ENCODE measurements at regions of chr7 and their contacts with region 1.

Region 1: DNA sequence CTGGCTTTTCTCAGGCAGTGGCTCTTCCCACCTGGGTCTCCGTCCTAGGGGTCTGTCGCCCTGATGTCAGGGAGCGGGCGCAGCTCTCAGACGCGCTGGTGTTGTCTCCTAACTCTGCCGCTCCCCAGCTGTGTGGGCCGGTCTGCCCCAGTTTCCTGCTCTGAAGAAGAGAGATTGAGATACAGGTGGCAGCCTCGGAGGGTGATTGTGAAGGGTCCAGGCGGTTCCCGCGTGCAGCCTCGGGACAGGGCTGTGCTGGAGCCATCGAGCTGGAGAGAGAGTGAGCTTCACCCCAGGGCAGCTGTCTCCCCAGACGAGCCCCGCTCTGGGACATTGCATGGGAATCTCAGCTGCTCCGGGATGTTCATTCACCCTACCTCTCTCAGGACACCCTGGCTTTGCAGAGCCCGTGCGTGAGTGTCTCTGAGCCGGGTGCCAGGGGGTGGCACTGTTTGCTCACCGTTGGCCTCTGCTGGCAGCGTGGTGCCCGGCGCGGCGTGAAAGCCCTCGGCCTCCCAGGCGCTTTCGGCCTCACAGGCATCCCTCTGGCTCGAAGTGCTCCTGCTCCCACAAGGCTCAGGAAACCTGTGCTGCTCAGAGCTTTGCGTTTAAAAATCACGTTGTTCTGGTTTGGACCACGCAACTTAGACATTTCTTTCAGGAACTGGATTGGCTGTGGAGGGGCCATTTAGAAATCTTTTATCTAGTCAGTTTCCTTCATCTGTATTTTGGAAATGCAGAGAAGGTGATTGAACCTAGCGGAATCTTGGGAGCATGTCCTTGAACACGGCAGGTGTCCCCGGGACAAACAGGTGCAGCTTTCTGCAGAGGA is 33.8 kb upstream of the ZFAND2A start:
- DNase-seq: peak in 2 of 3 donors; percentile 75 to 80
- ATAC-seq: peak; percentile 83 to 91
- H3K4me3 ChIP-seq: no peak overlapping the region
- H3K27ac ChIP-seq: no peak overlapping the region
- H3K4me1 ChIP-seq: no peaks in the 10 kb centered on the region
- H3K27me3 ChIP-seq: no peaks in the 10 kb centered on the region

Region 2: GRCh38 chr7:1412322-1413261 is 218.8 kb after region 1 on chr7:
- intact Hi-C with region 1: loop called in 1 of 4 experiments (anchors 5 kb)
- DNase-seq: peak; percentile 85 to 95 (median 92)
- ATAC-seq: peak; percentile 87 to 94
- H3K4me3 ChIP-seq: no peak overlapping the region
- H3K27ac ChIP-seq: no peak overlapping the region
- H3K4me1 ChIP-seq: no peaks in the 10 kb centered on the region
- H3K27me3 ChIP-seq: no peaks in the 10 kb centered on the region

Measured in right cardiac atrium (tissue), 5 donors.